ENCODE measurements at regions of chr17 and their contacts with region 1.

Region 1: DNA sequence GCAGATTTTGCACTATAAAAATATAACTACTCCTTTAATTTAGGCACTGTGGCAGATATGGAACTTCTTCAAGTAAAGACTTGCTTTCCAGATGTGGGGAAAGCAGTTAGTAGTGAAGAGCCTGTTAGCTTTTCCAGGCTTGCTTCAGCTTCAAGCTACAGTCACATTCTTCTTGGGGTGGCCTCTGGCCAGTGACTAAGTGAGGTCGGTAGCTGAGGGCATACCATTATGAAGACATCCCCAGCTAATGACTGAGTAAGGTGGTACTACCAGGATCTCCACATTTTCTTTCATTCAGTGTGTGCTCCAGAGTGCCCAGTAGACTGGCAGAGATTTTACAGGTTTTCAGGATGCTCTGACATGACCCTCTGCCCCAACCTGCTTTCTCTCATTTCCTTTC is 167.1 kb upstream of the KIF2B start:
- DNase-seq: no peak
- ATAC-seq: no peak

Region 2: GRCh38 chr17:53560953-53561352 is 94.6 kb before region 1 on chr17:
- intact Hi-C with region 1: no loop called
- DNase-seq: no peak
- ATAC-seq: no peak

Region 3: DNA sequence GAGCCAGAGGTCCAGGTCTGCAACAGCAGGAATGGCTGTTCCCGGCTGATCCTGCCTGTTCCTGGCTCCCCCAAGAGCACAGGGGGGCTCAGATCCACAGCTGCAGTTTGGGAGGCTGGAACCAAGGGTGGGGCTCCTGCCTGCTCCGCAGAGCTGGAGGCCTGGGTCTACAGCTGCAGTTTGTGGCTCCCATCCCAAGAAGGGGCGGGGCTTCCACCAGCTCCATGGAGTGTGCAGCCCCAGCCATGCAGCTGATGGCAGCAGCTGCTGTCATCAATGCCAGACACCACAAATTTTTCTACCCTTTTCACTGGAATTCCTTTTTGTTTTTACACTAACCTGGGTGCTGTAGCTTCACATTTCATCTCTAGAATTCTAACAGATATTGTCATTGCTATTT is 31.7 kb after region 1 on chr17:
- intact Hi-C with region 1: loop called (anchors 2 kb)
- DNase-seq: no peak
- ATAC-seq: no peak